Spleen (tissue), 13 donors: ENCODE measurements at regions of chrX and their contacts with region 1.

Region 1: GRCh38 chrX:150772150-150772970 is 79.2 kb downstream of the MTMR1 start:
- DNase-seq: peak; percentile 93
- H3K4me3 ChIP-seq: no peak overlapping the region
- H3K27ac ChIP-seq: no peak overlapping the region
- H3K4me1 ChIP-seq: peaks cover 0 to 11% (median under 1%) of the 10 kb centered on the region in 6 donors
- H3K27me3 ChIP-seq: no peaks in the 10 kb centered on the region
- CTCF ChIP-seq: peak; percentile 44 to 85 (median 76)
- POLR2A ChIP-seq: no peak

Region 2: GRCh38 chrX:151004082-151004481 is 231.7 kb after region 1 on chrX:
- intact Hi-C with region 1: loop called (anchors 5 kb)
- DNase-seq: no peak
- H3K4me3 ChIP-seq: no peak overlapping the region
- H3K27ac ChIP-seq: no peak overlapping the region
- H3K4me1 ChIP-seq: no peaks in the 10 kb centered on the region
- H3K27me3 ChIP-seq: peaks cover 0 to 7% (median 0%) of the 10 kb centered on the region in 7 donors
- CTCF ChIP-seq: peak in 3 of 11 experiments; percentile 17 to 33 (median 25)
- POLR2A ChIP-seq: no peak

Region 3: GRCh38 chrX:151082076-151082948 is 310.0 kb after region 1 on chrX:
- intact Hi-C with region 1: loop called (anchors 5 kb)
- DNase-seq: peak; percentile 89
- H3K4me3 ChIP-seq: peak overlapping the region in 1 of 8 donors; percentile 30
- H3K27ac ChIP-seq: no peak overlapping the region
- H3K4me1 ChIP-seq: peaks cover 0 to 9% (median 6%) of the 10 kb centered on the region in 6 donors
- H3K27me3 ChIP-seq: peaks cover 0 to 11% (median 0%) of the 10 kb centered on the region in 7 donors
- CTCF ChIP-seq: peak; percentile 82 to 92 (median 85)
- POLR2A ChIP-seq: no peak